Adrenal gland (tissue), 19 donors: ENCODE measurements at regions of chr17 and their contacts with region 1.

Region 1: GRCh38 chr17:68771867-68772515 is 170.8 kb upstream of the FAM20A start:
- DNase-seq: peak in 3 of 7 donors; percentile 28 to 54 (median 44)
- H3K4me3 ChIP-seq: peak overlapping the region in 1 of 4 donors; percentile 36
- H3K27ac ChIP-seq: peak overlapping the region in 2 of 5 donors; percentile 52 to 73
- H3K4me1 ChIP-seq: peaks cover 16 to 29% of the 10 kb centered on the region in 2 donors
- H3K27me3 ChIP-seq: no peaks in the 10 kb centered on the region
- CTCF ChIP-seq: peak; percentile 66 to 90 (median 72)
- POLR2A ChIP-seq: no peak

Region 2: GRCh38 chr17:68910251-68910705 is 138.3 kb after region 1 on chr17:
- intact Hi-C with region 1: loop called in 1 of 2 experiments (anchors 10 kb)
- DNase-seq: peak in 4 of 7 donors; percentile 17 to 54 (median 36)
- H3K4me3 ChIP-seq: no peak overlapping the region
- H3K27ac ChIP-seq: peak overlapping the region in 4 of 5 donors; percentile 42 to 87 (median 74)
- H3K4me1 ChIP-seq: peaks cover 14 to 37% of the 10 kb centered on the region in 2 donors
- H3K27me3 ChIP-seq: no peaks in the 10 kb centered on the region
- CTCF ChIP-seq: no peak
- POLR2A ChIP-seq: no peak

Region 3: DNA sequence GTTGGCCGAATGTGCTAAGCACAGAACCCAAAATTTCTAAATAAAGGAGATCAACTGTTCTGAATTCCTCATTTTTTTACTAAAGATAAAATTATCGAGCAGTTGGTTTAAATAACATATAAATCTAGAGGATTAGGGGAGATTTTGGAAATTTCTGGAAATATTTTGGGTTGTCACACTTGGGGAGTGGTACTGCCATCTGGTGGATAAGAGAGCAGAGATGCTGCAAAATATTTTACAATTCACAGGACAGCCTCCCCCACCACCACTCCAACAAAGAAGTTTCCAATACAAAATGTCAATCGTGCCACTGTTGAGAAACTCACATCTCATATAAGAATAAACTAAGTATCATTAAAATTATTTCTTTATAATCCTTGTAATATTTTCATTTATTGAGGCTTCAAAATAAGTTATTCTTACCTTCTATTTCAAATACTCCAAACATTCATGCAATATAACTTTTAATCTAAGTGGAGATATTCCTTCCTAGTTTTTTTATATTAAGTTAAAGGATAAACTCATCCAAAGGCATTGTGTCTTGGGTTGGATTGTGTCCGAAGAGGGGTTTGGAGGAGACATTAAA is 200.2 kb after region 1 on chr17:
- intact Hi-C with region 1: loop called in 1 of 2 experiments (anchors 5 kb)
- DNase-seq: peak in 4 of 7 donors; percentile 20 to 46 (median 34)
- H3K4me3 ChIP-seq: no peak overlapping the region
- H3K27ac ChIP-seq: no peak overlapping the region
- H3K4me1 ChIP-seq: peaks cover 0 to 11% of the 10 kb centered on the region in 2 donors
- H3K27me3 ChIP-seq: no peaks in the 10 kb centered on the region
- CTCF ChIP-seq: peak; percentile 54 to 77 (median 70)
- POLR2A ChIP-seq: no peak

Region 4: GRCh38 chr17:69235338-69235930 is 463.4 kb after region 1 on chr17:
- intact Hi-C with region 1: loop called in 1 of 2 experiments (anchors 5 kb)
- DNase-seq: peak; percentile 82 to 93 (median 87)
- H3K4me3 ChIP-seq: no peak overlapping the region
- H3K27ac ChIP-seq: no peak overlapping the region
- H3K4me1 ChIP-seq: peaks cover 0 to 4% of the 10 kb centered on the region in 2 donors
- H3K27me3 ChIP-seq: no peaks in the 10 kb centered on the region
- CTCF ChIP-seq: peak; percentile 73 to 97 (median 86)
- POLR2A ChIP-seq: no peak